ENCODE measurements at regions of chr15 and their contacts with region 1.

Region 1: GRCh38 chr15:39272901-39273300 is 308.0 kb upstream of the THBS1 start:
- DNase-seq: no peak
- ATAC-seq: no peak
- H3K4me3 ChIP-seq: no peak overlapping the region
- H3K27ac ChIP-seq: no peak overlapping the region
- H3K4me1 ChIP-seq: peaks cover 24% of the 10 kb centered on the region
- H3K27me3 ChIP-seq: no peaks in the 10 kb centered on the region
- CTCF ChIP-seq: no peak
- POLR2A ChIP-seq: no peak
- RAD21 ChIP-seq: no peak

Region 2: GRCh38 chr15:39202641-39203040 is 70.3 kb before region 1 on chr15:
- CTCF ChIA-PET with region 1: no interaction called
- POLR2A ChIA-PET with region 1: no interaction called
- dilution Hi-C with region 1: no loop called
- in situ Hi-C with region 1: no loop called
- intact Hi-C with region 1: no loop called
- DNase-seq: no peak
- ATAC-seq: no peak
- H3K4me3 ChIP-seq: no peak overlapping the region
- H3K27ac ChIP-seq: no peak overlapping the region
- H3K4me1 ChIP-seq: peaks cover 21% of the 10 kb centered on the region
- H3K27me3 ChIP-seq: no peaks in the 10 kb centered on the region
- CTCF ChIP-seq: no peak
- POLR2A ChIP-seq: no peak
- RAD21 ChIP-seq: no peak

Region 3: DNA sequence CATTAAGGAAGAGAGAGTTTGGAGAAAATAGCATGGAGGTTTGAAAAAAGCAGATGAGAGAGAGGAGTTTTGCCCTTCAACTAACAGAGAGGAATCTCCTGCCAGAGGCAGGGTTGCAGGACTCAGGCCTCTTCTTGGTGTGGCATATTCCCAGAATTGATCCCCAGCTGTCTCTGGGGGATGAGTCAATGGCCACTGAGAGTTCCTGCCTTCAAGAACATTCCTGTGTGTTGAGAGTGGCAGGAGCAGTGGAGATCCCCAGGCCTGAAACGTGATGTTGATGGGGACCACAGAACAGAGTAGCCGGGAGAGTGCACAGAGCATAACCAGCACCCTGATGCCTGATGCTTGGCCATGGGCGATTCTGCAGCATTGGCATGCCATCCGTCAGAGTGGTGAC is 40.4 kb before region 1 on chr15:
- CTCF ChIA-PET with region 1: no interaction called
- POLR2A ChIA-PET with region 1: interaction called, 10 read pairs
- dilution Hi-C with region 1: no loop called
- in situ Hi-C with region 1: no loop called
- intact Hi-C with region 1: no loop called
- DNase-seq: peak; percentile 95
- ATAC-seq: peak; percentile 86
- H3K4me3 ChIP-seq: no peak overlapping the region
- H3K27ac ChIP-seq: peak overlapping the region; percentile 44
- H3K4me1 ChIP-seq: peaks cover 22% of the 10 kb centered on the region
- H3K27me3 ChIP-seq: no peaks in the 10 kb centered on the region
- CTCF ChIP-seq: no peak
- POLR2A ChIP-seq: no peak
- RAD21 ChIP-seq: peak; percentile 22; the same call in 1 of the 2 replicates

Region 4: GRCh38 chr15:39290711-39291435 is 18.0 kb after region 1 on chr15:
- CTCF ChIA-PET with region 1: no interaction called
- POLR2A ChIA-PET with region 1: no interaction called
- dilution Hi-C with region 1: no loop called
- in situ Hi-C with region 1: no loop called
- intact Hi-C with region 1: no loop called
- DNase-seq: no peak
- ATAC-seq: no peak
- H3K4me3 ChIP-seq: no peak overlapping the region
- H3K27ac ChIP-seq: no peak overlapping the region
- H3K4me1 ChIP-seq: peaks cover 12% of the 10 kb centered on the region
- H3K27me3 ChIP-seq: no peaks in the 10 kb centered on the region
- CTCF ChIP-seq: no peak
- POLR2A ChIP-seq: no peak
- RAD21 ChIP-seq: no peak

Measured in IMR-90 (cell line).